CD8-positive, alpha-beta T cell (primary cell): ENCODE measurements at regions of chr12 and their contacts with region 1.

Region 1: GRCh38 chr12:48189331-48190125 is 6.1 kb downstream of the CCDC184 start:
- DNase-seq: peak; percentile 43 to 80 (median 71)
- ATAC-seq: peak; percentile 94
- H3K4me3 ChIP-seq: no peak overlapping the region
- H3K4me3 Mint-ChIP-seq: no peak overlapping the region
- H3K27ac ChIP-seq: no peak overlapping the region
- H3K27ac Mint-ChIP-seq: no peak overlapping the region
- H3K4me1 ChIP-seq: peaks cover under 1% of the 10 kb centered on the region
- H3K4me1 Mint-ChIP-seq: peaks cover 2% of the 10 kb centered on the region
- H3K27me3 ChIP-seq: peaks cover 2 to 5% of the 10 kb centered on the region in 2 experiments
- H3K27me3 Mint-ChIP-seq: peaks cover 30% of the 10 kb centered on the region
- CTCF ChIP-seq: peak; percentile 88

Region 2: GRCh38 chr12:47591361-47591791 is 598.2 kb before region 1 on chr12:
- CTCF ChIA-PET with region 1: no interaction called
- POLR2A ChIA-PET with region 1: no interaction called
- intact Hi-C with region 1: no loop called
- DNase-seq: no peak
- ATAC-seq: no peak
- H3K4me3 ChIP-seq: no peak overlapping the region
- H3K4me3 Mint-ChIP-seq: no peak overlapping the region
- H3K27ac ChIP-seq: no peak overlapping the region
- H3K27ac Mint-ChIP-seq: no peak overlapping the region
- H3K4me1 ChIP-seq: no peaks in the 10 kb centered on the region
- H3K4me1 Mint-ChIP-seq: peaks cover 2% of the 10 kb centered on the region
- H3K27me3 ChIP-seq: no peaks in the 10 kb centered on the region
- H3K27me3 Mint-ChIP-seq: no peaks in the 10 kb centered on the region
- CTCF ChIP-seq: no peak

Region 3: DNA sequence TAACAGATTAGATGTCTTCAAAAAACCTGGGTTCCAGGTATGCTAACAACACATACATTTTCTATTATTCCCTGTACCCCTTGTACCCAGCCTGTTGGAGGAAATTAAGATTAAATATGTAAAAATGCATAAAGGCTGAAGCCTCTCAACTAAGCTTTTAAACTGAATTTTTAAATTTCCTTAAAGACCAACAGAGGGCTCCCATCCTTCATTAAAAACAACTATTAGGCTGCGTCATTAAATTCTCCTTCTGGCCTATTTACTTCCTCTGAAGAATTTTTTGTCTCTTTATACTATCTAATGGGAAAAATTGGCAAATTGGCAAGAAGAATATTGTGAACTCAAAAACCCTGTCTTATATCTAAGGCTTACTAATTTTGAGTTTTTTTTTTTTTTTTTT is 105.5 kb before region 1 on chr12:
- CTCF ChIA-PET with region 1: no interaction called
- POLR2A ChIA-PET with region 1: no interaction called
- intact Hi-C with region 1: loop called in 1 of 2 experiments (anchors 2 kb)
- DNase-seq: peak in 2 of 9 experiments; percentile 13 to 33
- ATAC-seq: no peak
- H3K4me3 ChIP-seq: no peak overlapping the region
- H3K4me3 Mint-ChIP-seq: no peak overlapping the region
- H3K27ac ChIP-seq: no peak overlapping the region
- H3K27ac Mint-ChIP-seq: no peak overlapping the region
- H3K4me1 ChIP-seq: no peaks in the 10 kb centered on the region
- H3K4me1 Mint-ChIP-seq: no peaks in the 10 kb centered on the region
- H3K27me3 ChIP-seq: no peaks in the 10 kb centered on the region
- H3K27me3 Mint-ChIP-seq: no peaks in the 10 kb centered on the region
- CTCF ChIP-seq: no peak

Region 4: DNA sequence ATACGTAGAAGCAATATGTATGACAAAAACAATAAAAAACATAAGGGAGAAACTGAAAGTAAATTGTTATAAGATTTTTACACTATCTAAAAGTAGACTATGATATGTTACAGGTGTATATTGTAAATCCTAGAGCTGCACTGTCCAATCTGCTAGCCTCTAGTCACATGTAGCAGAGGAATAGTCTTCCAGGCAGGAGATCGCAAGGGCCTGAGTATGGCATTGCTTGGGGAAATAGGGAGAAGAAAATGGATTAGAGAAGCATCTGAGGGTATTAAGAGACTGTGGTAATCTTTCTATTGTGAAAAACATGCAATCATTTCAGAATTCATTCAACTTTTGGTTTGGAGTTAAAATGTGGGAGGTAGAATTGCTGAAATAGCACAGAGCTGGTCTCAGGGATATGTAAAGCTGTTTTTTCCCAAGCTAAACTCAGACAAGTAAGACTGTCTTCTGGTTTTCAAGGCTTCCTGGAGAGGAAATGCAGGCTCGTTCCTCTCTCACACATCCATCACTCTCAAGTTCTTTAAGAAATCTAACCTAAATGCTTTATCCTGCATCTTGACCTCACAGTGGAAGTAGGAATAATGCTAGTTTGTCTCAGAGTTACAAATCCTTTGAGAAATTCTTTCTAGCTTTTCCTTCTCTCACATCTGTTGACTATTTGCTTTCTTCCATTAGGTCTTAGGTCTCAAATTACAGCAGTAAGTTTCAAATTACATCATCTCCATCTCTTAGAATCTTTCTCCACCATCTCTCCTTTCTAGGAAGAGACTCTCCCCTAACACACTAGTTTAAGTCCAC is 13.7 kb before region 1 on chr12:
- CTCF ChIA-PET with region 1: interaction called, 32 read pairs
- POLR2A ChIA-PET with region 1: no interaction called
- intact Hi-C with region 1: no loop called
- DNase-seq: no peak
- ATAC-seq: no peak
- H3K4me3 ChIP-seq: no peak overlapping the region
- H3K4me3 Mint-ChIP-seq: peak overlapping the region; percentile 24
- H3K27ac ChIP-seq: no peak overlapping the region
- H3K27ac Mint-ChIP-seq: no peak overlapping the region
- H3K4me1 ChIP-seq: no peaks in the 10 kb centered on the region
- H3K4me1 Mint-ChIP-seq: peaks cover 8% of the 10 kb centered on the region
- H3K27me3 ChIP-seq: no peaks in the 10 kb centered on the region
- H3K27me3 Mint-ChIP-seq: peaks cover 16% of the 10 kb centered on the region
- CTCF ChIP-seq: no peak